Colonic mucosa (tissue), 4 donors: ENCODE measurements at regions of chr2 and their contacts with region 1.

Region 1: GRCh38 chr2:190511104-190511503 is 23.4 kb downstream of the NEMP2 start:
- DNase-seq: peak; percentile 27
- H3K4me3 ChIP-seq: no peak overlapping the region
- H3K27ac ChIP-seq: no peak overlapping the region
- H3K4me1 ChIP-seq: peaks cover 3% of the 10 kb centered on the region
- H3K27me3 ChIP-seq: no peaks in the 10 kb centered on the region
- CTCF ChIP-seq: no peak

Region 2: GRCh38 chr2:190328573-190329147 is 182.4 kb before region 1 on chr2:
- intact Hi-C with region 1: loop called (anchors 5 kb)
- DNase-seq: no peak
- H3K4me3 ChIP-seq: no peak overlapping the region
- H3K27ac ChIP-seq: no peak overlapping the region
- H3K4me1 ChIP-seq: no peaks in the 10 kb centered on the region
- H3K27me3 ChIP-seq: no peaks in the 10 kb centered on the region
- CTCF ChIP-seq: no peak

Region 3: DNA sequence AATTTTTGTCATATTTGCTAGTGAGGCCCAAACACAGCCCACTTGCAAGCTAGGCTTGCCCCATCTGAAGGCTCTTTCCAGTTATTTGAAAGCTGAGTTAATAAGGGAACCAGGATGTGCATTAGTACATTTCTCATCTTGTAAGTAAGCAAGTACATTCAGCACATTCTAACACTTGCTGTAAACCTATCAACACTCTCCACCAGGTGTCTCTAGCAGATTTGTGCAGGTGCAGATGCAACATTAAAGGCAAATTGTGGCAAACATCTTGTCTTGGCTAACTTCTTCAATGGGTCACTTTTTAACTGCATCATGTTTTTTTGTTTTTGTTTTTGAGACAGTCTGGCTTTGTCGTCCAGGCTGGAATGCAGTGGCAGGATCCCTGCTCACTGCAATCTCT is 128.3 kb before region 1 on chr2:
- intact Hi-C with region 1: loop called (anchors 5 kb)
- DNase-seq: peak; percentile 55
- H3K4me3 ChIP-seq: no peak overlapping the region
- H3K27ac ChIP-seq: no peak overlapping the region
- H3K4me1 ChIP-seq: no peaks in the 10 kb centered on the region
- H3K27me3 ChIP-seq: no peaks in the 10 kb centered on the region
- CTCF ChIP-seq: peak; percentile 39

Region 4: GRCh38 chr2:190714958-190715357 is 203.9 kb after region 1 on chr2:
- intact Hi-C with region 1: no loop called
- DNase-seq: no peak
- H3K4me3 ChIP-seq: no peak overlapping the region
- H3K27ac ChIP-seq: no peak overlapping the region
- H3K4me1 ChIP-seq: no peaks in the 10 kb centered on the region
- H3K27me3 ChIP-seq: no peaks in the 10 kb centered on the region
- CTCF ChIP-seq: no peak